Mammary epithelial cell (primary cell): ENCODE measurements at regions of chr3 and their contacts with region 1.

Region 1: GRCh38 chr3:56494686-56495322 is 26.5 kb upstream of the ERC2 start:
- DNase-seq: peak; percentile 69
- H3K4me3 ChIP-seq: no peak overlapping the region
- H3K27ac ChIP-seq: no peak overlapping the region
- H3K4me1 ChIP-seq: no peaks in the 10 kb centered on the region
- H3K27me3 ChIP-seq: no peaks in the 10 kb centered on the region
- CTCF ChIP-seq: peak; percentile 97 to 98

Region 2: DNA sequence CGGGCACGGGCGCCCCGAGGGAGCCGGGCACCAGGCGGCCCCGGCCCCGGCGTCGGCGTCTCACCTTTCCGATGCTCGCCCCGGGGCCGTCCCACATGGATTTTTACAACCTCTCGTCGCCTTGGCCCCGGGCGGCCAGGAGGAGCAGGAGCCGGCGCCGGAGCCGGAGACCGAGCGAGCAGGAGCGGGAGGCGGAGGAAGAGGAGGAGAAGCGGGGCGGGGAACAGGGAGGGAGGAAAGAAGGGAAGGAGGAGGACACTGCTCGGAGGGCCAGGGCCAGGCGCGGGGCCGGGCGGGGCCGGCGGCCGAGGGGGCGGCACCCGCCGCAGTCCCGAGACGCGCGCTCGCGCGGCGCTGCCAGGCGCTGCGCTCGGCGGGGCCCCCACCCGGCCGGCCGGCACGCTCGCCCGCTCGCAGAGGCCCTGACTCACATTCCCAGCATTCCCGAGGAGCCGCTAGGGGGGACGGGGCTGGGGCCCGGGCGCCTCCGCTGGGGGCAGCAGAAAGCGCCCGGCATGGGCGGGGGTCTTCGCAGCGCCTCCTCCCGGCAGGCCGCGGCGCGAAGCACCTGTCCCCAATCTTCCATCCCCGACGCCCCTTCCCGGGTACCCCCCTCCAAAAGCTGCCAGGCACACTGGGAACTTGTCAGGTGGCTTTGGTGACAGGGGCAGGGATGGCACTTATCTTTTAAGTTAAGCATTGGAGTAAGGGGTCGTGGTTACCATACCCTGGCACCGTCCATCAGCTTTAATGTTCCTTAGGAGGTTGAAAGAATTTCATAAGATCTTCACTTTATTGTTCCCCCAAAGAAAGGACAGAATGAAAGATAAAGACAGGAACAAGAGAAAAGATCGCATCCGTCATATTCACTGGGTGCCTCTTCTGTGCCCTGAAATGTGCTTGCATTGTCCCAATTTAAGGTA is 26.4 kb before region 1 on chr3 and contains the start of gene ERC2:
- CTCF ChIA-PET with region 1: no interaction called
- dilution Hi-C with region 1: no loop called
- in situ Hi-C with region 1: no loop called
- intact Hi-C with region 1: loop called (anchors 2 kb)
- DNase-seq: peak; percentile 27
- H3K4me3 ChIP-seq: peak within 1 kb of the TSS; percentile 34 to 49 (median 47)
- H3K27ac ChIP-seq: no peak within 1 kb of the TSS
- H3K4me1 ChIP-seq: peaks cover 3% of the 10 kb centered on the region
- H3K27me3 ChIP-seq: no peaks in the 10 kb centered on the region
- CTCF ChIP-seq: no peak
- total RNA-seq, gene ERC2: 1.5 to 2.0 TPM

Region 3: DNA sequence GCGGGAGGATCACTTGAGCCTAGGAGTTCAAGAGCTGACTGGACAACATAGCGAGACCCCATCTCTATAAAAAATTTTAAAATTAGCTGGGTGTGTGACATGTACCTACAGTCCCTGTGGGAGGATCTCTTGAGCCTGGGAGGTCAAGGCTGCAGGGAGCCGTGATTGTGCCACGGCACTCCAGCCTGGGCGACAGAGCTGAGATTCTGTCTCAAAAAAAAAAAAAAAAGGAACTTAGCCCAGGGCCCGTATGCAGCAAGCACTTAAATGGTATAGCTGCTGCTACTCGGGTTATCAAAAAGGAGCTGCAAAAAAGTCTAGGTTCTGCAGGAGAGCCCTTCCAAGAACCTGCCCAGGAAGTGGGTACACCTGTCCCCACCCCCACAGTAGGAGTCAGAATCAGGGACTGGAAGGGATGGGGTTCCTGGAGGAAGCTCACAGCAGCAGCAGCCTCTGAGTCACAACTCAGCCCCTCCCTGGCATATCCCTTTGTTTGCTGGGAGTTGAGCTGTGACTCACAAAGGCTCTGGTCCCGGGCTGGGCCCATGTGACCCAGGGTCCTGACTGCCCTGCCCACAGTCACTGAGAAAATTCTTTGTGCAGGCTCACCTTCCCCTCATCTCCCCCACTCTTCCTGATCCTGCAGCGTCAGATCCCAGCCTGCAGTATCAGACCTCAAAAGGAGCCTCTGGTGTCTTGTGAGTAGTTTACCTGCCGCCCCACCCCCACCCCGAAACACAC is 565.5 kb after region 1 on chr3 and contains the start of gene SPATA12:
- CTCF ChIA-PET with region 1: interaction called, 13 read pairs
- dilution Hi-C with region 1: no loop called
- in situ Hi-C with region 1: no loop called
- intact Hi-C with region 1: no loop called
- DNase-seq: peak; percentile 98
- H3K4me3 ChIP-seq: no peak within 1 kb of the TSS
- H3K27ac ChIP-seq: peak within 1 kb of the TSS; percentile 88
- H3K4me1 ChIP-seq: peaks cover 30% of the 10 kb centered on the region
- H3K27me3 ChIP-seq: no peaks in the 10 kb centered on the region
- CTCF ChIP-seq: no peak
- total RNA-seq, gene SPATA12: 0.21 TPM in 1 of 2 donors, not detected in the other